Natural killer cell (primary cell): ENCODE measurements at regions of chr11 and their contacts with region 1.

Region 1: GRCh38 chr11:40885250-40885954 is 574.0 kb downstream of the LRRC4C start:
- DNase-seq: no peak
- ATAC-seq: no peak
- H3K4me3 ChIP-seq: no peak overlapping the region
- H3K4me3 Mint-ChIP-seq: no peak overlapping the region
- H3K27ac ChIP-seq: no peak overlapping the region
- H3K27ac Mint-ChIP-seq: no peak overlapping the region
- H3K4me1 ChIP-seq: no peaks in the 10 kb centered on the region
- H3K4me1 Mint-ChIP-seq: no peaks in the 10 kb centered on the region
- H3K27me3 ChIP-seq: no peaks in the 10 kb centered on the region
- H3K27me3 Mint-ChIP-seq: no peaks in the 10 kb centered on the region
- CTCF ChIP-seq: no peak

Region 2: GRCh38 chr11:40819230-40819629 is 66.2 kb before region 1 on chr11:
- intact Hi-C with region 1: no loop called
- DNase-seq: no peak
- ATAC-seq: no peak
- H3K4me3 ChIP-seq: no peak overlapping the region
- H3K4me3 Mint-ChIP-seq: no peak overlapping the region
- H3K27ac ChIP-seq: no peak overlapping the region
- H3K27ac Mint-ChIP-seq: no peak overlapping the region
- H3K4me1 ChIP-seq: no peaks in the 10 kb centered on the region
- H3K4me1 Mint-ChIP-seq: no peaks in the 10 kb centered on the region
- H3K27me3 ChIP-seq: no peaks in the 10 kb centered on the region
- H3K27me3 Mint-ChIP-seq: no peaks in the 10 kb centered on the region
- CTCF ChIP-seq: no peak

Region 3: GRCh38 chr11:40842750-40843339 is 42.6 kb before region 1 on chr11:
- intact Hi-C with region 1: no loop called
- DNase-seq: no peak
- ATAC-seq: no peak
- H3K4me3 ChIP-seq: no peak overlapping the region
- H3K4me3 Mint-ChIP-seq: no peak overlapping the region
- H3K27ac ChIP-seq: no peak overlapping the region
- H3K27ac Mint-ChIP-seq: no peak overlapping the region
- H3K4me1 ChIP-seq: no peaks in the 10 kb centered on the region
- H3K4me1 Mint-ChIP-seq: no peaks in the 10 kb centered on the region
- H3K27me3 ChIP-seq: no peaks in the 10 kb centered on the region
- H3K27me3 Mint-ChIP-seq: no peaks in the 10 kb centered on the region
- CTCF ChIP-seq: no peak

Region 4: GRCh38 chr11:40938002-40938401 is 52.6 kb after region 1 on chr11:
- intact Hi-C with region 1: loop called (anchors 10 kb)
- DNase-seq: no peak
- ATAC-seq: no peak
- H3K4me3 ChIP-seq: no peak overlapping the region
- H3K4me3 Mint-ChIP-seq: no peak overlapping the region
- H3K27ac ChIP-seq: no peak overlapping the region
- H3K27ac Mint-ChIP-seq: no peak overlapping the region
- H3K4me1 ChIP-seq: no peaks in the 10 kb centered on the region
- H3K4me1 Mint-ChIP-seq: no peaks in the 10 kb centered on the region
- H3K27me3 ChIP-seq: no peaks in the 10 kb centered on the region
- H3K27me3 Mint-ChIP-seq: no peaks in the 10 kb centered on the region
- CTCF ChIP-seq: no peak

Region 5: DNA sequence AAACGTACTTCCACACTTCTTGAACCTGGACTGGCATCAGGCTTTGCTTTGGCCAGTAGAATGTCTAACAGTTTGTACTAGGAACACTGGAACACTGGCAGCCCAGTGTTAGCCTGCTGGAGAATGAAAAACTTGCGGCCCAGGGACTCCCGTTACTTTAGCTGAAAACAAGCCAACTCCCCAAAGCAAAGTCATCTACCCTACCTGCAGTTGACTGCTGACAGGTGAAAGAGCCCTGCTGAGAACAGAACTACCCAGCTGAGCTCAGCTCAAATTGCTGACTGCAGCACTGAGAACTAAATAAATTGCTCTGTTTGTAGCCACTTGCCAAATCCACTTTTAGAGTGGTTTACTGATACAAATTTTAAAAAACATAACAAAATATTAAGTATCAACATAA is 231.6 kb after region 1 on chr11:
- intact Hi-C with region 1: no loop called
- DNase-seq: no peak
- ATAC-seq: no peak
- H3K4me3 ChIP-seq: no peak overlapping the region
- H3K4me3 Mint-ChIP-seq: no peak overlapping the region
- H3K27ac ChIP-seq: no peak overlapping the region
- H3K27ac Mint-ChIP-seq: no peak overlapping the region
- H3K4me1 ChIP-seq: no peaks in the 10 kb centered on the region
- H3K4me1 Mint-ChIP-seq: no peaks in the 10 kb centered on the region
- H3K27me3 ChIP-seq: no peaks in the 10 kb centered on the region
- H3K27me3 Mint-ChIP-seq: no peaks in the 10 kb centered on the region
- CTCF ChIP-seq: no peak